GM18951 (cell line): ENCODE measurements at regions of chr22 and their contacts with region 1.

Region 1: GRCh38 chr22:41403532-41404318 is 22.0 kb downstream of the TEF start:
- POLR2A ChIP-seq: no peak

Region 2: DNA sequence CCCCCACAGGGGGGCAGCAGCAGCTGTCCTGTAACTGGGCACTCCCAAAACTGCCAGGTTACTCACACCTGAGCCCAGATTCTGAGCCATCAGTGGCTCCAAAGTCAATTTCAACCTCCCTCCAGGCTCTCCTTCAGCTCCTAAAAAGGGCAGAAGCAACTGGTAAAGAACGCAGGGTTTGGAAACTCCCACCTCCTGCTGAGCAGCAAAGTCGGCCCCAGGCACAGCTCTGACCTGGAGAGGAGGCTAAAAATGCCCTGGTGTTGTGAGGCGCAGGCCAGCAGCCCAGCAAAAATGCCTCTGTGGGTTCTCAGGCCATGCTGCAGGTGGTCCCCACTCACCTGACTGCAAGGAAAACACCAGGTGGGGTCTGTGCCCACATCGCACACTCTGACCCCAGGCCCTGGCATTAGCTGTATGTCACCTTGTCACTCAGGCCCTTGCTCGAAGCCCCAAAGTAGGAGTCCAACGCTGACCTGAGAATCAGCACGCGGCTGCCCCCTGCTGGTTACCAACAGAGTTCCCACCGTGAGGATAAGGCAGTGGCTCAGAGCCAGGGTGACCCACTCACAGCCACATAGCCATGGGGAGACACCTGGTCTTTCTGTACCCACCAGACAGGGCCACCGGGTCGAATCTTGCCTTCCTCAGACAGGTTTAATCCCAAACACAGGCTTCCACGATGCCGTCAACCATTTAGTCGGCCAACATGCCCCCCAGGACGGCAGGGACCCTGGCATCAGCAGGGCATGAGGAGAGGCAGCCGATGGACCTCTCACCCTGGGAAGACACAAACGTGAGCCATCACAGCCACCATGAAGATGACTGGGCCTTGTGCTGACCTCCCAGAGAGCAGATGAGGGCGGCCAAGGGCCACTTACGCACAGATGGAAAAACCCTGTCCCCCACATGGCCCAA is 129.4 kb after region 1 on chr22:
- in situ Hi-C with region 1: loop called (anchors 5 kb)
- POLR2A ChIP-seq: peak; percentile 32